Left cardiac atrium (tissue), 4 donors: ENCODE measurements at regions of chr3 and their contacts with region 1.

Region 1: GRCh38 chr3:87350364-87351199 is 74.2 kb upstream of the POU1F1 start:
- DNase-seq: no peak
- ATAC-seq: peak in 1 of 2 donors; percentile 61

Region 2: DNA sequence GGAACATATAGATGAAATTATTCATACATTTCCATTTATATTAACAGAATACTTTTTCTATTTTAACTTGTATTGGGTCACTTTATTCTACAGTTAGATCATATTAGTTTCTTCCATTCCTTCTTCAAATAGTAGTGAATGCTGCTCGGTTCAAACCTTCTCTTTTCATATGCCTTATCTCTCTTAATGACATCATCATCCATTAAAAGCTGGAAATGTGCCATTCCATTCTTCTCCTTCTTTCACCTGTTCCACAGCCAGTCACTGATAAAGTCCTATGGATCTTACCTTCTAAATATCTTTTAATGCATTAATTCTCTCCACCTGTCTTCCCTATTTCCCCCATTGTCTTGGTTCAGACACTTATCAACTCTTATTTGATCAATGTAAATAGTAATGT is 283.9 kb after region 1 on chr3:
- intact Hi-C with region 1: no loop called
- DNase-seq: no peak
- ATAC-seq: no peak

Region 3: DNA sequence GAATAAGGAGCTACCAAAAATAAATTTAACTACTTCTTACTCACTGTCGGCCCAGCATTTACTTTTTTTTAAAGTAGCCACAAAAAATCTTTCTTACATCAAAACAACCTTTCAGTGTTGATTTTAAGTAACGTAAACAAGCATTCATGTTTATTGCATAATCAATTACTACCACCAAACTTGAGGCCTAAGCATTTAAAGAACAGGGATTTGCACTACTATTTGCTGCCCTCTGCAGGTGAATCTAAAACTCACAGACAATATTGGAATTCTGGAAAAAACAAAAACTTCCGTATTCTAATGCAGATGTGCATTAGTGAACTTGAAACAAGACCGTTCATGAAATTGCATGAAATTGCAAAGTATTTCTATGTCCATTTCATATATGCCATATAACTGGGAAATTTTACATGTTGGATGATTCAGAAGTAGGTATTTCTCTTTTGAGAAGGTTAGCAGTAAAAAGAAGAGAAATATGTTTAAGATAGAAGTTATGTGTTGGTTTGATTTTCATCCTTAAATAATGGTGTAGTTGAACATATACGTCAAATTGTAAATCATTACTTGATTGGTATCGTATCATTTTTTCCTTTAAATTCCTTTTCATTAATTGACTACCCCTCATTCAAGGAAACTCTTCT is 652.7 kb after region 1 on chr3:
- intact Hi-C with region 1: loop called in 1 of 2 experiments (anchors 5 kb)
- DNase-seq: no peak
- ATAC-seq: no peak

Region 4: GRCh38 chr3:88113311-88114162 is 763.0 kb after region 1 on chr3:
- intact Hi-C with region 1: loop called in 1 of 2 experiments (anchors 5 kb)
- DNase-seq: peak; percentile 23
- ATAC-seq: peak; percentile 86 to 90